ENCODE measurements at regions of chr14 and their contacts with region 1.

Region 1: GRCh38 chr14:49633640-49634546 is 1.2 kb downstream of the DNAAF2 start:
- DNase-seq: peak; percentile 92 to 95 (median 94)
- H3K4me3 ChIP-seq: peak overlapping the region; percentile 90 to 99
- H3K4me3 Mint-ChIP-seq: peak overlapping the region; percentile 95 to 100 (median 97)
- H3K27ac ChIP-seq: peak overlapping the region; percentile 99
- H3K27ac Mint-ChIP-seq: peak overlapping the region; percentile 92 to 100 (median 96)
- H3K4me1 ChIP-seq: peaks cover 48% of the 10 kb centered on the region
- H3K4me1 Mint-ChIP-seq: peaks cover 26 to 75% (median 43%) of the 10 kb centered on the region in 4 donors
- H3K27me3 ChIP-seq: no peaks in the 10 kb centered on the region
- H3K27me3 Mint-ChIP-seq: peaks cover 0 to 1% of the 10 kb centered on the region in 2 donors

Region 2: DNA sequence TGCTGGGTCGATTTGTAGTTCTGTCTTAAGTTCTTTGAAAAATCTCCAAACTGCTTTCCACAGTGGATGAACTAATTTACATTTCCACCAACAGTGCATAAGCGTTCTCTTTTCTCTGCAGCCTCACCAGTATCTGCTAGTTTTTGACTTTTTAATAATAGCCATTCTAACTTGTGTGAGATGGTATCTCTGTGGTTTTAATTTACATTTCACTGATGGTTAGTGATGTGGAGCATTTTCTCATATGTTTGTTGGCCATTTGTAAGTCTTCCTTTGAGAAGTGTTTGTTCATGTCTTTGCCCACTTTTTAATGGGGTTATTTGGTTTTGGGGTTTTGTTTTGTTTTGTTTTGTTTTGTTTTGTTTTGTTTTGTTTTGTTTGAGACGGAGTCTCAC is 73.5 kb before region 1 on chr14:
- CTCF ChIA-PET with region 1: no interaction called
- POLR2A ChIA-PET with region 1: no interaction called
- intact Hi-C with region 1: no loop called
- DNase-seq: no peak
- H3K4me3 ChIP-seq: no peak overlapping the region
- H3K4me3 Mint-ChIP-seq: no peak overlapping the region
- H3K27ac ChIP-seq: no peak overlapping the region
- H3K27ac Mint-ChIP-seq: no peak overlapping the region
- H3K4me1 ChIP-seq: no peaks in the 10 kb centered on the region
- H3K4me1 Mint-ChIP-seq: no peaks in the 10 kb centered on the region
- H3K27me3 ChIP-seq: no peaks in the 10 kb centered on the region
- H3K27me3 Mint-ChIP-seq: peaks cover 3 to 4% of the 10 kb centered on the region in 2 donors

Region 3: DNA sequence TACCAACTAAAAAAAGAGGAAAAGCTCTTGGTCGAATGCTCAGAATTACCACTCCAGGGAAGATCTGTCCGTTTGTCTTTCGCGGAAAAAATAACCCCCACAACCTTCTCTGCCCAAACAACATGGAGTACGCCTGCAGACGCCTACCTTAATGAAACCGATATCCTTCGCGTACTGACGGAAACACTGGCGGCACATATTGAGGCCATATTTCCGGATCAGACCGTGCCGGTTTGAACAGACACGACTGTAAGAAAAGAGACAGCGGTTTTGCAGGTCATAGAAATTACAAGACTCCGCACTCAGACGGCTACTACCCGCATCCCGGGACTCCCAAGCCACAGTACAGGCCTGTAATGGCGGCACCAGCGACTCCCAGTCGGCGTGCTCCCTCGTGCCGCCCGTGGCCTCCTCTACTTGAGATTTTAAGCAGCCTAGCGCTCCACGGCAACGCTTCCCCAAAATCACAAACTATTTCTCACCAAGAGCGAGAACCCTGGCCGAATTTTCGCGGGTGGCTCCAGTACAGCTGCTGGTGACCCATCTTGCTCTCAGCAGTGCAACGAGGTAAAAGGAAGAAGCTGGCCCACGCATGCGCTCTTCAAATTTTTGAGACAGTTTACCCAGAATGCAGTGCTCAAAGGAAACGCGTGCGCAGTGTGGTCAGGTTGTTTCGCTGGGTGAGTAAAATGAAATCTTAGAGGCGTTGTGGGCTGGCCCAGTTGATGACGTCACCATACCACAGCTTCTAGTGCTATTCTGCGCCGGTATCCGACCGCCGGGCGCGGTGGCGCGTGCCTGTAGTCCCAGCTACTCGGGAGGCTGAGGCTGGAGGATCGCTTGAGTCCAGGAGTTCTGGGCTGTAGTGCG is 47.9 kb before region 1 on chr14 and contains the start of gene RPS29:
- CTCF ChIA-PET with region 1: interaction called, 24 read pairs
- POLR2A ChIA-PET with region 1: interaction called, 75 read pairs
- intact Hi-C with region 1: loop called (anchors 1 kb)
- DNase-seq: peak; percentile 98 to 99 (median 99)
- H3K4me3 ChIP-seq: peak within 1 kb of the TSS; percentile 93 to 98
- H3K4me3 Mint-ChIP-seq: peak within 1 kb of the TSS; percentile 87 to 98 (median 95)
- H3K27ac ChIP-seq: peak within 1 kb of the TSS; percentile 95
- H3K27ac Mint-ChIP-seq: peak within 1 kb of the TSS; percentile 88 to 100 (median 99)
- H3K4me1 ChIP-seq: peaks cover 38% of the 10 kb centered on the region
- H3K4me1 Mint-ChIP-seq: peaks cover 29 to 62% (median 42%) of the 10 kb centered on the region in 4 donors
- H3K27me3 ChIP-seq: no peaks in the 10 kb centered on the region
- H3K27me3 Mint-ChIP-seq: peaks cover 0 to 4% of the 10 kb centered on the region in 2 donors
- total RNA-seq, gene RPS29: 3,602 to 3,749 TPM

Region 4: GRCh38 chr14:49620182-49621113 is 13.4 kb before region 1 on chr14 and contains the starts of genes MGAT2 and RPL36AL:
- CTCF ChIA-PET with region 1: interaction called, 135 read pairs
- POLR2A ChIA-PET with region 1: interaction called, 413 read pairs
- intact Hi-C with region 1: loop called (anchors 1 kb)
- DNase-seq: peak; percentile 95 to 97 (median 96)
- H3K4me3 ChIP-seq: peak within 1 kb of the TSS; percentile 99 to 100
- H3K4me3 Mint-ChIP-seq: peak within 1 kb of the TSS; percentile 95 to 99 (median 96)
- H3K27ac ChIP-seq: peak within 1 kb of the TSS; percentile 98
- H3K27ac Mint-ChIP-seq: peak within 1 kb of the TSS; percentile 98 to 100 (median 99)
- H3K4me1 ChIP-seq: peaks cover 65% of the 10 kb centered on the region
- H3K4me1 Mint-ChIP-seq: peaks cover 34 to 69% (median 43%) of the 10 kb centered on the region in 4 donors
- H3K27me3 ChIP-seq: no peaks in the 10 kb centered on the region
- H3K27me3 Mint-ChIP-seq: no peaks in the 10 kb centered on the region
- total RNA-seq, gene MGAT2: 58.5 to 58.7 TPM
- total RNA-seq, gene RPL36AL: 416 to 441 TPM

Region 5: GRCh38 chr14:49783394-49784010 is 149.6 kb after region 1 on chr14:
- CTCF ChIA-PET with region 1: interaction called, 20 read pairs
- POLR2A ChIA-PET with region 1: no interaction called
- intact Hi-C with region 1: no loop called
- DNase-seq: no peak
- H3K4me3 ChIP-seq: no peak overlapping the region
- H3K4me3 Mint-ChIP-seq: no peak overlapping the region
- H3K27ac ChIP-seq: no peak overlapping the region
- H3K27ac Mint-ChIP-seq: peak overlapping the region in 1 of 7 donors; percentile 13
- H3K4me1 ChIP-seq: no peaks in the 10 kb centered on the region
- H3K4me1 Mint-ChIP-seq: peaks cover 0 to 4% (median 0%) of the 10 kb centered on the region in 4 donors
- H3K27me3 ChIP-seq: no peaks in the 10 kb centered on the region
- H3K27me3 Mint-ChIP-seq: no peaks in the 10 kb centered on the region

Region 6: GRCh38 chr14:50038398-50039119 is 404.7 kb after region 1 on chr14:
- CTCF ChIA-PET with region 1: no interaction called
- POLR2A ChIA-PET with region 1: no interaction called
- intact Hi-C with region 1: loop called (anchors 2 kb)
- DNase-seq: peak in 2 of 5 donors; percentile 10 to 63
- H3K4me3 ChIP-seq: no peak overlapping the region
- H3K4me3 Mint-ChIP-seq: peak overlapping the region in 7 of 8 donors; percentile 37 to 92 (median 73)
- H3K27ac ChIP-seq: peak overlapping the region; percentile 28
- H3K27ac Mint-ChIP-seq: peak overlapping the region; percentile 81 to 96 (median 93)
- H3K4me1 ChIP-seq: peaks cover 59% of the 10 kb centered on the region
- H3K4me1 Mint-ChIP-seq: peaks cover 38 to 71% (median 57%) of the 10 kb centered on the region in 4 donors
- H3K27me3 ChIP-seq: no peaks in the 10 kb centered on the region
- H3K27me3 Mint-ChIP-seq: no peaks in the 10 kb centered on the region

Region 7: GRCh38 chr14:50532502-50533240 is 898.8 kb after region 1 on chr14 and contains the start of gene MAP4K5:
- CTCF ChIA-PET with region 1: no interaction called
- POLR2A ChIA-PET with region 1: no interaction called
- intact Hi-C with region 1: loop called (anchors 10 kb)
- DNase-seq: peak; percentile 85 to 89 (median 88)
- H3K4me3 ChIP-seq: peak within 1 kb of the TSS; percentile 26 to 68
- H3K4me3 Mint-ChIP-seq: peak within 1 kb of the TSS; percentile 88 to 94 (median 93)
- H3K27ac ChIP-seq: peak within 1 kb of the TSS; percentile 69
- H3K27ac Mint-ChIP-seq: peak within 1 kb of the TSS; percentile 85 to 95 (median 91)
- H3K4me1 ChIP-seq: peaks cover 46% of the 10 kb centered on the region
- H3K4me1 Mint-ChIP-seq: peaks cover 33 to 50% (median 43%) of the 10 kb centered on the region in 4 donors
- H3K27me3 ChIP-seq: no peaks in the 10 kb centered on the region
- H3K27me3 Mint-ChIP-seq: no peaks in the 10 kb centered on the region
- total RNA-seq, gene MAP4K5: 42.6 to 43.0 TPM

Measured in CD4-positive, alpha-beta memory T cell (primary cell).